ENCODE measurements at regions of chr5 and their contacts with region 1.

Region 1: DNA sequence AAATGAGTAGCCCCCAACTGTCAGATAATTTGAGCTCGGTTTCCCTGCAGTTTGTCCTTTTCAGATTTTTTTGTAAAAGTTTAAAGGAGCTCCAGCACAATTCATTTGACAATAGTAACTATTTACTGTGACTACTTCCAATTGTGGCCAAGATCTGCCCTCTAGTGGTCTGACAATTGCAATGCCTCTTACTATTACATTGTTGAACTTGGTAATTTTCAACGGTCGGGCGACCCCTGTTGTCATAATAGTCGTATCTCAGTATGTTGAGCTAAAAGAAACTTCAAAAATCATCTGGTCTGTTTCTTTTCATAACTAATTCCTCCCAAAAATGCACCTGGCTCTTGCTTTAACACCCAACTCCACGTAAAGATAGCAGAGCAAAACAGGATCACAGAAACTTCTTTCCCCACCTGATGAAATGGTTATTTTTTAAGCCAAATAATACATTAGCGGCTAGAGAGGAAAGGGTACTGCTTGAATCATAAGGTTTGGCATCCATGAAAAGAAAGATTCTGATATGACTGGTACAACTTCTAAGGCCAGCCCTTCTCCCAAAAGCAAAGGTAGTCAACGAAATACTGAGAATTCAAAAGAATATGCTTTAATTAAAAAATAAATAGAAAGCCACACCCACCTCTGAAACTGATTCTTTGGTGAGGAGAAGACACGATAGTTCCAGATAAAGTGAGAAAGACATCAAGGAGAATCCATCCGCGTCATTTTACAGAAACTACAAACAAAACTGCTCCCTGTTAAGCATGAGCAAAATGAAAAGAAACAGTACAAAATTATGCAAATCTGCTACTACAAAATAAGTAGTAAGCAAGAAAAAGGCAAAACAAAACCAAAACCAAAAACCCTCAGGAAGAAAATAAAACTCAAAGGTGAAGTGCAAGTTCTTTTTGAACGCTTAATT is 76.9 kb upstream of the HTR4 start:
- DNase-seq: peak; percentile 38
- H3K4me3 ChIP-seq: no peak overlapping the region
- CTCF ChIP-seq: peak; percentile 75

Region 2: GRCh38 chr5:147857302-147858129 is 873.7 kb before region 1 on chr5:
- CTCF ChIA-PET with region 1: interaction called, 22 read pairs
- POLR2A ChIA-PET with region 1: no interaction called
- DNase-seq: peak; percentile 7
- H3K4me3 ChIP-seq: no peak overlapping the region
- CTCF ChIP-seq: peak; percentile 68

Region 3: GRCh38 chr5:148374692-148375360 is 356.4 kb before region 1 on chr5:
- CTCF ChIA-PET with region 1: interaction called, 10 read pairs
- POLR2A ChIA-PET with region 1: no interaction called
- DNase-seq: no peak
- H3K4me3 ChIP-seq: no peak overlapping the region
- CTCF ChIP-seq: peak; percentile 83

Region 4: GRCh38 chr5:148697180-148697808 is 33.9 kb before region 1 on chr5:
- CTCF ChIA-PET with region 1: interaction called, 10 read pairs
- POLR2A ChIA-PET with region 1: no interaction called
- DNase-seq: peak; percentile 31
- H3K4me3 ChIP-seq: no peak overlapping the region
- CTCF ChIP-seq: no peak

Region 5: DNA sequence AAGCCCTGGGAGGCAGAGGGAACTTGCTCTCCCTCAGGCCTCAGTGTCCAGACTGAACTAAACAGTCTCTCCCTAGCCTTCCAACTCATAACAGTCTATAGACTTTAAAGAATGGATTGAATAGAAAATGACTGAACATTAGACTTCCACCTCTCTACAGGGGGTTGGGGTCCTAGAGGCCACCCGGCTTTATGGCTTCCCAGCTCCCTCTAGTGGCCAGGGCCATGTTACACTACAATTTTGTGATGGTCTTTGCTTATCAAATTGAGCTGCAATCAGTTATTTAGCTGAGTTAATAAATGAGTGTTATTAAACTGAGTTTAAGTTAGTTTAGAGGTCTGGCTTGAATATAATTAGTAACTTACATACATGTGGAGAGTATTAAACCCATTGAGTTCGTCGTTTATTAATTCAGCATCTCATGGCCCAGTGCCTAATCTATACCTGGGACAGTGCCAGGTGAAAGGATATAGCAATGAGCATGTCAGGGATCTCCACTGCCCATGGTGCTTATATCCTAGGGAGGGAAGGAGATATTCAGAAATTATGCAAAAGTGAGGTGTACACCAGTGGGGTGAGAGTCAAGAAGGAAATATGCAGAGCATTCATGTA is 226.5 kb after region 1 on chr5:
- CTCF ChIA-PET with region 1: interaction called, 21 read pairs
- POLR2A ChIA-PET with region 1: no interaction called
- DNase-seq: no peak
- H3K4me3 ChIP-seq: no peak overlapping the region
- CTCF ChIP-seq: peak; percentile 63

Region 6: DNA sequence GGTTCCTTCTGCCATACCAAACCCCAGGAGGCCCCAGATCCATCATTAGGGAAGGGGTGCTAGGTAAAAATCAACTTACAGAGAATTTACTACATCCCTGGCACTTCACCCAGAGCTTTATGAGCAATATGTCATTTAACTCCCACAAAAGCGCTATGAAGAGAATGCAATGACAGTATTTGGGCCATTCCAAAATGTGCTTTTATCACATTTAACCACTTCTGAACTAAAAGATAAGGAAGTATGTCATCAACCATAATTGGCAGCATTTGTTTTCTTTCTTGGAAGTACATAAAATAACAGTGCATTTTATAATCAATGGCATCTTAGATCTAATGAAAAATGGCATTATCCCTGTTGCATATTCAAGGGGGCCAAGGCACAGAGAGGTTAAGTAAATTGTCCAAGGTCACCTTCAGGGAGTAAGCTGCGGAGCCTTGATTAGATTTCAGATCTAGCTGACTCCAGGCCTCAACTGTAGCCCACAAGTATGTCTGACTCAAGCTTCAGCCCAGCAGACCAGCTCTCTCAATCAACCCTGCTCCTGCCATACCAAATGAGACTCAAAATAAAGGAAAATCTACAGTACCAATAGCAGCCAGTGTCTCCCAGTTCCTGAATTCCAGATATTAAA is 315.1 kb after region 1 on chr5:
- CTCF ChIA-PET with region 1: interaction called, 911 read pairs
- POLR2A ChIA-PET with region 1: no interaction called
- DNase-seq: no peak
- H3K4me3 ChIP-seq: no peak overlapping the region
- CTCF ChIP-seq: no peak

Region 7: DNA sequence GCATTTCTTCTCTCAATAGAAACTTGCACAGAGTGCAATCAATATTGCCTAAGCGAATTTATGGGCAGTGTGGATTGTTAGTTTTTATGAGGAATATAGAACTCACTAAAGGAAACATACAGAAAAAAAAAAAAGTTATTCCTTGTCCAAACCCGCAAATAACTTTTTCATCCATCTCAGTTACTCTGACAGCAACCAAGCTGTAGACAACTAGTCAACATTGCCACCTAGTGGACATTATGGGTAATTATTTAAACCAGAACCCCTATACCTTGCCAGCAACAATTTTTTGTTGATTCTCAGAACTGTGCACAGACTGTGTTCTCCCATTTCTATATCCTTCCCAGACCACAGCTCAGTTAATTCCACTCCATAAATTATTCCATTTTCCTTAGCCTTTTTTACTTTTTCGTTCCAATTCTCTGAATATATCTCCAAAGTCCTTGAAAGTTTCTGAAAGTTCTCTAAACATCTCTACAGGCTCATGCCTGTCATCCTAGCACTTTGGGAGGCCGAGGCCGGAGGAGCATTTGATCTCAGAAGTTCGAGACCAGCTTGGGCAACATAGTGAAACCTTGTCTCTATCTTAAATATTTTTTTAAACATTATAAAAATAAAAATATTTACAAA is 537.8 kb after region 1 on chr5:
- CTCF ChIA-PET with region 1: interaction called, 11 read pairs
- POLR2A ChIA-PET with region 1: no interaction called
- DNase-seq: no peak
- H3K4me3 ChIP-seq: no peak overlapping the region
- CTCF ChIP-seq: peak; percentile 36